ENCODE measurements at regions of chr11 and their contacts with region 1.

Region 1: GRCh38 chr11:75547580-75548058 is 14.4 kb upstream of the SERPINH1 start:
- DNase-seq: peak in 7 of 10 donors; percentile 49 to 72 (median 65)
- H3K4me3 ChIP-seq: no peak overlapping the region
- H3K27ac ChIP-seq: no peak overlapping the region
- H3K27me3 ChIP-seq: no peaks in the 10 kb centered on the region
- CTCF ChIP-seq: peak; percentile 23 to 98 (median 91)

Region 2: DNA sequence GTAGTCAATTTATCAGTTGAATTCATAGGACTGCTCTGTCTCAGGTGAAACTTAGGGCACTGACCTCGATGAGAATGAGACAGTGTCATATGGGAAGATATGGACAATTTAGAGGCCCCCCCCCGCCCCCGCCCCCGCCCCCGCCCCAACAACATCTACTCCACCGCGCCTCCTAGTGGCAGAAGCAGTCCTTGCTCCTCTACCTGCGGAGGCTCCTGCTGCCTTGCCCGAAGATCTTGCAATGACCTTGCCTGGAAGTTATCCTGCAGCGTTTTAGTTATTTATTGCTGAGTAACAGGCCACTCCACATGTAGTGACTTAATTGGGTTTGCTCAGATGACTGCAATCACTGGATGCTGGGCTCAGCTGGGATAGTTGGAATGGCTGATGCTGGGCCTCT is 29.6 kb after region 1 on chr11:
- intact Hi-C with region 1: loop called in 1 of 2 experiments (anchors 1 kb)
- DNase-seq: peak in 3 of 10 donors; percentile 22 to 41 (median 39)
- H3K4me3 ChIP-seq: no peak overlapping the region
- H3K27ac ChIP-seq: no peak overlapping the region
- H3K27me3 ChIP-seq: no peaks in the 10 kb centered on the region
- CTCF ChIP-seq: peak in 55 of 56 donors; percentile 23 to 76 (median 63)

Region 3: DNA sequence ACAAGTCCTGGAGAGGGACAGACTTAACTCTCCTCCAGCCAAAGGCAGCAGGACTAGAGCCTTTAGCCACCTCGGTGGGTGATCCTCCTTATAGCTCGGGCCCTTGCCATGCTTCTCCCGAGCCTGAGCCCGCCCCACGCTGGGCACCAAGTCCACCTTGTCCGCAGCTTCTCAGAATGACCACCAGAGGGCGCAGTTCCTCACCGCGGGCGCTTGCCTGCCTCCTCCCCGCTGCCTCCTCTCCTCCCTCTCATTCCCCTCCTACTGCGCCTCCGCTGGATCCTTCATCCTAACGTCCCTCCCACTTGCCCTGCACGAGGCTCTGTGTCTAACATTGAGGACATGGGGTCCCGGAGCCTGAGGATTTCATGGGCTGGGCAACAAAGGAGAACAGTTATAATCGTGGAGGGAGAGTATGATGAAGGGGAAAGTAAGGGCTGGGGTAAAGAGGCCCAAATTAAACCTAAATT is 158.7 kb after region 1 on chr11:
- intact Hi-C with region 1: loop called in 1 of 2 experiments (anchors 5 kb)
- DNase-seq: peak in 9 of 10 donors; percentile 33 to 81 (median 55)
- H3K4me3 ChIP-seq: peak overlapping the region in 18 of 59 donors; percentile 0 to 42 (median 16)
- H3K27ac ChIP-seq: no peak overlapping the region
- H3K27me3 ChIP-seq: no peaks in the 10 kb centered on the region
- CTCF ChIP-seq: peak; percentile 80 to 98 (median 94)

Region 4: DNA sequence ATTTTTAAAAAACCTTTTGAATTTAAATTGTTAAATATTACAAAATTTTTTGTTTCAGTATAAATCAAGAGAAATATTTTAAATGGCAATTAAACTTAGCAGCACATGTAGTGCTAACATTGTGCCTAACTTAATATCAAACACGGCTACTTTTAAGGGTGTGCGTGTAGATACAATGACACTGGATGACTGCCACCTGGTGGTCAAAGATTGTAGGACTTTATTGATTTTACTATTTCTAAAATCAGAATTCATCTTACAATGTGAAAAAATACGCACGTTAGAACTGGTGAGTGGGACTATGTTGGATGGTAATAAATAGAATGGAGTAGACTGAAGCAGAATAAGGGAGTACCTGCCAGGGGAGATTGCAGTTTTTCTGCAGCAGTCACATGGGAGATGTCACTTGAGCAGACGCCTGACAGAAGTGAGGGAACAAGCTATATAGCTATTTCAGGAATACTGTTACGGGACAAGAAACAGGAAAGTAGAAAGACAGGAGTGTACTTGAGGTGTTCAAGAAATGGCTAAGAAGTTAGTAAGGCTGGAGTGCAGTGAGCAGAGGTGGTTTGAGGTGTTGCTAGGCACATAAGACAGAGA is 320.3 kb after region 1 on chr11:
- intact Hi-C with region 1: loop called in 1 of 2 experiments (anchors 10 kb)
- DNase-seq: peak in 2 of 10 donors; percentile 39 to 44
- H3K4me3 ChIP-seq: no peak overlapping the region
- H3K27ac ChIP-seq: peak overlapping the region; percentile 46 to 100 (median 92)
- H3K27me3 ChIP-seq: no peaks in the 10 kb centered on the region
- CTCF ChIP-seq: peak; percentile 79 to 100 (median 92)

Region 5: GRCh38 chr11:76152086-76152681 is 604.6 kb after region 1 on chr11:
- intact Hi-C with region 1: loop called in 1 of 2 experiments (anchors 5 kb)
- DNase-seq: peak; percentile 63 to 88 (median 83)
- H3K4me3 ChIP-seq: peak overlapping the region in 57 of 59 donors; percentile 22 to 73 (median 53)
- H3K27ac ChIP-seq: peak overlapping the region in 4 of 59 donors; percentile 3 to 74 (median 34)
- H3K27me3 ChIP-seq: no peaks in the 10 kb centered on the region
- CTCF ChIP-seq: peak; percentile 77 to 99 (median 94)